ENCODE measurements at regions of chr17 and their contacts with region 1.

Region 1: GRCh38 chr17:7311110-7311698 is 3.8 kb downstream of the EIF5A start:
- DNase-seq: no peak
- H3K4me3 Mint-ChIP-seq: peak overlapping the region; percentile 81
- H3K27ac Mint-ChIP-seq: peak overlapping the region; percentile 21
- H3K4me1 Mint-ChIP-seq: peaks cover 34% of the 10 kb centered on the region
- H3K27me3 Mint-ChIP-seq: no peaks in the 10 kb centered on the region
- CTCF ChIP-seq: no peak

Region 2: DNA sequence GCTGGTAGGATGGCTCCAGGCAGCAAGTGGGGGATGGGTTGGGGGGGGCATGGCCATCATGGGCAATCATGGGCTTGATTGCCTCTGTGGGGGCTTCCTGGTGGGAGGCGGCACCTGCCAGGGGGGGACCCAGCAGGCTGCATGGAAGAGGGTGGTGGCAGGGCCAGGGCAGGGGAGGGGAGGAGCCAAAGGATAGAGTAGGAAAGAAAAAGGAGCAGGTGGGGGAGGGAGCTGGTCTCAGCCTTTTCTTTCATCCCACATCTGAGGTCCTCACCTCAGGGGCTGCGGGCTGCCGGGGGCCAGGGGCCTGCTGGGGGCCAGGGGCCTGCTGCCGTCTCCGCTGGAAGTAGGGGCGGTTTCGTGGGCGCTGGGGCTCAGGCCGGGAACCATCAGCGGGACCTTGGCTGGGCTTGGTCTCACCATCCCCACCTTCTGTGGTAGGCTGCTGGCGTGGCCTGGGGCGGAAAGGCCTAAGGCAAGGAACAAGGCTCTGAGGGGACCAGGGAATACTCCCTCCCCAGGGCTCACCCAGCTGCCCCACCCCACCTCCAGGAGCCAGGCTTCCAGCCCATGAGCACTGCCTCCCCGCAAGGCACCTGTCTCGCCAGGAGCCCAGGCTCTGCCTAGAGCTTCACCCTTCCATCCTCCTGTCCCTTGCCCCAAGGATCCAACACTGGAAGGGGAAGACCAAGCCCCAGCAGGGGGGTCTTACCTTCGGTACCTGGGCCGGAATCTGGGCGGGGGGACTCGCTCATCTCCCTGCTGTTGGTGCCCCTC is 21.8 kb before region 1 on chr17:
- CTCF ChIA-PET with region 1: interaction called, 10 read pairs
- intact Hi-C with region 1: no loop called
- DNase-seq: no peak
- H3K4me3 Mint-ChIP-seq: no peak overlapping the region
- H3K27ac Mint-ChIP-seq: no peak overlapping the region
- H3K4me1 Mint-ChIP-seq: no peaks in the 10 kb centered on the region
- H3K27me3 Mint-ChIP-seq: peaks cover 31% of the 10 kb centered on the region
- CTCF ChIP-seq: no peak

Region 3: DNA sequence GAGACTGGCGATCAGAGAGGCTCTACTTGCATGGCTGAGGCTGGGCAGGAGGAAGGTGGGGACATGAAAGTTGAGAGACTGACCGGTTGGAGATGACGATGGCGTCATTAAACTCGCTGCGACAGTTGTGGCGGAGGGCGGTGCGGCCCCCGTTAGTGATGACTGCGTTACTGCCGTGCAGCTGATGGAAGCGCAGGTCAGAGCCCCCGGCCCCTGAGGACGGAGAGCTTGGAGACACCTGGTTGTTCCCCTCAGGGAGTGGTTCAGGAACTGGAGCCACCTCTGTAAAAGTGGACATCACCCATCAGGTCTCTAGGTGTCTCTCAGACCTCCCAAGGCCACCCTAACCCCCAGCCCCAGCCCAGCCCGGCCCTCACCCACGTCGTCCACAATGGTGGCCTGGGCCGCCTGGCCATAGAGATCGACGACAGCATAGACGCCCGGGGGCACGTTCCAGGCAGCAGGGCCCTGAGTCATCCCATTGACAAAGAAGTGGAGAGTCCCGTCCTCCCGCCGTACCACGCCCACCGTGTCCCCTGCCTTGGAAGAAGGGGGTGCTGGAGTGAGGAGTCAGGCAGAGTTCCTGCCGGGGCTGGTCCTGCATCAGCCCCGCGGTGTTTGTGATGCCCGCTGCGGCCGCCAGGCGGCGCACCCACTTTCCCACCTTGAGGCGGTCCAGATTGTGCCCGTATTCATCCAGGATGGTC is 12.7 kb after region 1 on chr17:
- CTCF ChIA-PET with region 1: no interaction called
- intact Hi-C with region 1: no loop called
- DNase-seq: no peak
- H3K4me3 Mint-ChIP-seq: no peak overlapping the region
- H3K27ac Mint-ChIP-seq: no peak overlapping the region
- H3K4me1 Mint-ChIP-seq: peaks cover 13% of the 10 kb centered on the region
- H3K27me3 Mint-ChIP-seq: no peaks in the 10 kb centered on the region
- CTCF ChIP-seq: no peak

Region 4: GRCh38 chr17:7351665-7352501 is 40.7 kb after region 1 on chr17 and contains the start of gene KCTD11:
- CTCF ChIA-PET with region 1: no interaction called
- intact Hi-C with region 1: no loop called
- DNase-seq: peak; percentile 94
- H3K4me3 Mint-ChIP-seq: peak within 1 kb of the TSS; percentile 93
- H3K27ac Mint-ChIP-seq: peak within 1 kb of the TSS; percentile 95
- H3K4me1 Mint-ChIP-seq: peaks cover 28% of the 10 kb centered on the region
- H3K27me3 Mint-ChIP-seq: peaks cover 20% of the 10 kb centered on the region
- CTCF ChIP-seq: no peak
- total RNA-seq, gene KCTD11: 8.5 and 9.9 TPM in 2 replicates